Activated T-helper 2 cell treated with anti-CD3 and anti-CD28 coated beads, Interferon-gamma antibody, Interleukin-2, Interleukin-4, amounts not matched to agents 10 μg/mL and 5 μg/mL and 100 μg/mL, durations not matched to agents 14 hours and 24 hours and 36 hours (primary cell): ENCODE measurements at regions of chr22 and their contacts with region 1.

Region 1: DNA sequence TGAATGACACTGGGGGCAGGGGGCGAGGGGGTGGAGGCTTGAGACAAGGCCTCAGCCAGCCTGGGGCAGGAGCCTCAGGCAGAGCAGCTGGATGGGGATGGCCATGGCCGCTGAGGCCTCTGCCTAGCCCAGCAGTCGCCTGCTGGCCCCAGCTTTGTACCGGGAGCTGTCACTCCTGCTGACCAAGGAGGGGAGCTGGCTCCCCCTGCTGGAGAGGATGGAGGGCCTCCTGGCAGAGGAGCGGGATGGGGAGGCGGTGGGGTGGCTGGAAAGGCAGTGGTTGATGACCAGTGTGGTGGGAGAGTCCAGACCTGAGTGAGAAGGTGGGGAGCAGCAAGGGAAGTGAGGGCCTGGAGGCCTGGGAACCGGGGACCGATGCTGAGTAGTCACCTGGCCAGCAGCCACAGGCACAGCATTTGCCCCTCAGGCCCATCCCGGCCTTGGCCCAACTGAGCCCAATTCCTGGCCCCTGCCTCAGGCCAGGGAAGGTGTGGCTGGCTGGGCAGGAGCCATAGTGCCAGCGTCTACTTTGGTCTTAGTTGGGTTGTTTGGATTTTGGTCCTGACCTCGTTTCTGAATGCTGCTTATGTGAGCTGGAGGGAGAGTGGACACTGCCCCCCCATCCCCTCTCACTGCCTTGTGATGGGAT is 6.0 kb upstream of the SUSD2 start:
- DNase-seq: peak; percentile 41
- H3K4me3 Mint-ChIP-seq: no peak overlapping the region
- H3K27ac Mint-ChIP-seq: no peak overlapping the region
- H3K4me1 Mint-ChIP-seq: no peaks in the 10 kb centered on the region
- H3K27me3 Mint-ChIP-seq: no peaks in the 10 kb centered on the region

Region 2: GRCh38 chr22:23984430-23984829 is 190.9 kb before region 1 on chr22:
- intact Hi-C with region 1: loop called (anchors 10 kb)
- DNase-seq: peak; percentile 46
- H3K4me3 Mint-ChIP-seq: no peak overlapping the region
- H3K27ac Mint-ChIP-seq: no peak overlapping the region
- H3K4me1 Mint-ChIP-seq: peaks cover 8% of the 10 kb centered on the region
- H3K27me3 Mint-ChIP-seq: peaks cover 5% of the 10 kb centered on the region

Region 3: GRCh38 chr22:24101911-24102321 is 73.4 kb before region 1 on chr22:
- intact Hi-C with region 1: no loop called
- DNase-seq: no peak
- H3K4me3 Mint-ChIP-seq: no peak overlapping the region
- H3K27ac Mint-ChIP-seq: no peak overlapping the region
- H3K4me1 Mint-ChIP-seq: peaks cover 19% of the 10 kb centered on the region
- H3K27me3 Mint-ChIP-seq: no peaks in the 10 kb centered on the region